T-cell (primary cell): ENCODE measurements at regions of chr3 and their contacts with region 1.

Region 1: DNA sequence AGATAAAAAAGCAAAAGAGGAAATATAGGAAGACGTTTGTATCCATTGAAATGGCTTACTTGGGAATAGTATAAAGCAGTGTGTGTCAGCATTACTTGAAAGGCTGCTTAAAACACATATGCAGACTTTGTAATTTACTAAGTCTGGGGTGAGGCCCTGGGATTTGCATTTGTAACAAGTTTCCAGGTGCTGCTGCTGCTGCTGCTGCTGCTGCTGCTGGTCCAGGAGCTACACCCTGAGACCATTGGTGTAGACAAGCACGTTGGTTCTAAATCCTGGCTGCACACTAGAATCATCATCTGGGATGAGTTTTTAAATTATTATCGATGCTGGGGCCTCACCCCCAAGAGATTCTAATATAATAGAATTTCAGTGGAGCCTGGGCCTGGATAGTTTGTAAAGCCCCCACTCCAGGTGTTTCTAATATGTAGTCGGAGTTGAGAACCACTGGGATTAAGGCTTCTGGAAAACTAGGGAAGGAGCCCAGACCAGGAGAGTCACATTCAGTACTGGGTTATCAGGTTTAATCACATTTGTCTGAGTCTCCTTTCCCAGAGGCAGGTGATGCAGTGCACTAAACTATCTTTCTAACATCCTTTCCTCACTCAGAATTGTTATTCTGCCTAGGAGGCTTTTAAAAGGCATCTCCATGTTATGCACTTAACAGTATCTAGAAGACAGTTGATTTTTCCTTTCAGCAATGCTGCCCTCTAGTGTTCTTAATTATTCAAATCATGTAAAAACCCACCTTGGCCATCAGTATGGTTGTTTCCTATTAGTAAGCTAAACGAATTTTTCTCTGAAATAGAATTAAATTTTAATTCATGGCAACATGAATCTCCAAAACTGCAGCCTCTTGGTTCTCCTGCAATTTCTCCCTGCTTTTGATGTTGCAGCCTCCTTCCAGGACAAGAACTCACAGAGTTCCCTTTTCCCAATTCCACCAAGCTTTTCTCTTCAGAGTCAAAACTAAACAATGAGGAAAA is 45.4 kb downstream of the SSR3 start:
- DNase-seq: peak in 2 of 35 experiments; percentile 18 to 71
- ATAC-seq: peak; percentile 78 to 89 (median 80)
- H3K4me3 ChIP-seq: no peak overlapping the region
- H3K4me3 Mint-ChIP-seq: no peak overlapping the region
- H3K27ac ChIP-seq: no peak overlapping the region
- H3K27ac Mint-ChIP-seq: no peak overlapping the region
- H3K4me1 ChIP-seq: no peaks in the 10 kb centered on the region
- H3K4me1 Mint-ChIP-seq: peaks cover 8 to 17% (median 10%) of the 10 kb centered on the region in 3 donors
- H3K27me3 ChIP-seq: peaks cover 0 to 2% of the 10 kb centered on the region in 2 experiments
- H3K27me3 Mint-ChIP-seq: peaks cover 10% of the 10 kb centered on the region in 2 donors

Region 2: DNA sequence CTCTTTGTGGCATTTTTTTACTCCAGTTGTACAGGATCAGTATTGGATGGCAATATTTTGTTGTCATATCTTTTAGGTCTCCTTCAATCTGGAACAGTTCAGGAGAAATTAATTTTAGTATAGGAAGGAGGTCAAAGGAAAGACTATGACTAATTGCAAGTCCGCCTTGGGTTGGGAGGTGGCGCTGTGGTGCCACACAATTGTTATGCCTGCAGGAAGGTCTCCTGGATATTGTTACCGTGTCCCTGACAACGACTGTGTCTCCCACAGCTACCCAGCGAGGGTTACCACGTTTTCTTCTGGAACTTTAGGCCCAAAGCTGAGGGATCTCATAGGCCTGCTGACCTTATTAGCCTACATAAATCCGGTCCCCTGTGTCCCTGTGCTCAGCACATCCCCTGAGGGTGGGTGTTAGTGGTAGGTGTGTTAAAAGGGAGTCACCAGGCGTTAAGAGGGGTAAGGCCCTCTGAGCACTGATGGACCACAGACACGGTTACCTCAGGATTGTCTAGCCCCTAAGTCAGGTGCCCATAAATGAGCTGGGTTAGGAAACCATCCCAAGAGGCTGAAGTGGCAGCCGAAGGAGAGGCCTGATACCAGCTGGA is 357.6 kb before region 1 on chr3:
- CTCF ChIA-PET with region 1: interaction called, 29 to 72 read pairs
- POLR2A ChIA-PET with region 1: no interaction called
- DNase-seq: peak; percentile 5 to 70 (median 39)
- ATAC-seq: peak; percentile 38 to 69 (median 53)
- H3K4me3 ChIP-seq: no peak overlapping the region
- H3K4me3 Mint-ChIP-seq: no peak overlapping the region
- H3K27ac ChIP-seq: no peak overlapping the region
- H3K27ac Mint-ChIP-seq: no peak overlapping the region
- H3K4me1 ChIP-seq: no peaks in the 10 kb centered on the region
- H3K4me1 Mint-ChIP-seq: peaks cover 0 to 5% (median 2%) of the 10 kb centered on the region in 3 donors
- H3K27me3 ChIP-seq: no peaks in the 10 kb centered on the region
- H3K27me3 Mint-ChIP-seq: peaks cover 0 to 6% of the 10 kb centered on the region in 2 donors

Region 3: DNA sequence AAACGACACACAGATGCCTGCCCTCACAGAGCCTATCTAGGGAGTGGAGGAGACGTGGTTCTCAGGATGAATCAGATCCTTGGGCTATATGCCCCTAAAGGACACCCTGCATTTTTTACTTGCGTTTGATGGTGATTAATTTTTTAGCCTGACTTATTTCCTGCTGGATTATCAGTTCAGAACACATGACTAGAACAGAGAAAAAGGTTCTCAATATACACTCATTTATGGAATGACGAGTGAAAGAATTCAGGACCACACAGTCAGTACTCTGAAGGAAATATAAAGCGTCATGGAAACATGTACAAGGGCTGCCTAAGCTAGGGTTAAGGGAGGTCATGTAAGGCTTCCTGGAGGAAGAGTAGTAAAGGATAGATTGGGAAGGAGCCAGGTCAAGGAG is 76.3 kb before region 1 on chr3:
- CTCF ChIA-PET with region 1: no interaction called
- POLR2A ChIA-PET with region 1: no interaction called
- DNase-seq: no peak
- ATAC-seq: no peak
- H3K4me3 ChIP-seq: no peak overlapping the region
- H3K4me3 Mint-ChIP-seq: no peak overlapping the region
- H3K27ac ChIP-seq: no peak overlapping the region
- H3K27ac Mint-ChIP-seq: no peak overlapping the region
- H3K4me1 ChIP-seq: no peaks in the 10 kb centered on the region
- H3K4me1 Mint-ChIP-seq: no peaks in the 10 kb centered on the region
- H3K27me3 ChIP-seq: peaks cover 0 to 2% of the 10 kb centered on the region in 2 experiments
- H3K27me3 Mint-ChIP-seq: peaks cover 18 to 22% of the 10 kb centered on the region in 2 donors

Region 4: GRCh38 chr3:156449712-156450574 is 59.5 kb before region 1 on chr3:
- CTCF ChIA-PET with region 1: interaction called, 10 to 15 read pairs
- POLR2A ChIA-PET with region 1: interaction called in 1 of 2 experiments, 4 read pairs
- DNase-seq: peak in 1 of 35 experiments; percentile 22
- ATAC-seq: peak in 1 of 4 experiments; percentile 32
- H3K4me3 ChIP-seq: no peak overlapping the region
- H3K4me3 Mint-ChIP-seq: no peak overlapping the region
- H3K27ac ChIP-seq: no peak overlapping the region
- H3K27ac Mint-ChIP-seq: no peak overlapping the region
- H3K4me1 ChIP-seq: no peaks in the 10 kb centered on the region
- H3K4me1 Mint-ChIP-seq: no peaks in the 10 kb centered on the region
- H3K27me3 ChIP-seq: peaks cover 0 to 2% of the 10 kb centered on the region in 2 experiments
- H3K27me3 Mint-ChIP-seq: peaks cover 9 to 15% of the 10 kb centered on the region in 2 donors

Region 5: DNA sequence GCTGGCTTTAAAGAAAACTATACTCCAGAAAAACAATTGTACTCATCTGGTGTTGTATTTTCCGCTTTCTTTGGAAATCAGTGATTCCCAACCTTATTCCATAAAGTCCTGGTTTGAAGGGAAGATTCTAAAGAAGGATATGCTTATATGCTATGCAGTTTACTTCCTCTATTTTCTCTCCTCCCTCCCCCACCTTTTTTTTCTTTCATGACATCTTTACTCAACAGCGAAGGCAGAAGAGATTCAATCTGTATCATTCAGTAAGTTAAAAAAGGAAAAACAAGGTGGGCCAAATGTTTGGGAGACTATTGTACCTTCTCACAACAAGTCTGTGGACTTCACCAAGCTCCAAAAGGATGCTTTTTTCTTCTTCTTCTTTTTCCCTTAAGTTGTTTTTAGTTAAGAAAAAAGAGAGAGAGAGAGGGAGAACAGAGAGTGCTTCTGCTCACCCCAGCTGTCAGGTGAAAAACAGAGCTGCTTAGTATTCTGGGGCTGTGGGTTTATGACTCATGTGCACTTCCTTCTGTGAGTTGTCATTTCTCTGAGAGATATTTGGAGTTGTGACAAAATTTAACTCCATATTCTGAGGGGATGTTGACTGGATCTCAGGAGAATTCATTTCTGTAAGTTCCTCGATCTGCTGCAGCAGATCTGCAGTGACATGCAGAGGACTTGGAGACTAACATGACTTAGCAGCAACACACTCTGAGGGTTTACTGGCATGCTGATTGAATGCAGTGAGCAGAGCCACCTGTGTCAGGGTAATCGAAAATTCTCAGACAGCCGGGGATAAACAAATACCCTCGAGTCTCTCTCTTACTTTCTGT is 25.3 kb before region 1 on chr3:
- CTCF ChIA-PET with region 1: interaction called, 6 to 13 read pairs
- POLR2A ChIA-PET with region 1: interaction called, 4 to 5 read pairs
- DNase-seq: peak in 34 of 35 experiments; percentile 1 to 72 (median 38)
- ATAC-seq: peak; percentile 89 to 95 (median 90)
- H3K4me3 ChIP-seq: peak overlapping the region in 1 of 2 donors; percentile 24
- H3K4me3 Mint-ChIP-seq: peak overlapping the region; percentile 54 to 76 (median 74)
- H3K27ac ChIP-seq: peak overlapping the region; percentile 91
- H3K27ac Mint-ChIP-seq: peak overlapping the region; percentile 84 to 92
- H3K4me1 ChIP-seq: peaks cover 8 to 17% of the 10 kb centered on the region in 2 experiments
- H3K4me1 Mint-ChIP-seq: peaks cover 37 to 48% (median 47%) of the 10 kb centered on the region in 3 donors
- H3K27me3 ChIP-seq: no peaks in the 10 kb centered on the region
- H3K27me3 Mint-ChIP-seq: peaks cover 0 to 1% of the 10 kb centered on the region in 2 donors